Heart right ventricle (tissue), 16 donors: ENCODE measurements at regions of chr13 and their contacts with region 1.

Region 1: GRCh38 chr13:36261976-36262375 is 35.6 kb downstream of the CCDC169 start:
- DNase-seq: no peak
- ATAC-seq: peak in 1 of 8 donors; percentile 68
- H3K4me3 ChIP-seq: no peak overlapping the region
- H3K27ac ChIP-seq: no peak overlapping the region
- H3K4me1 ChIP-seq: no peaks in the 10 kb centered on the region
- H3K27me3 ChIP-seq: no peaks in the 10 kb centered on the region
- CTCF ChIP-seq: no peak

Region 2: GRCh38 chr13:35818633-35819067 is 443.3 kb before region 1 on chr13:
- intact Hi-C with region 1: no loop called
- DNase-seq: no peak
- ATAC-seq: peak in 6 of 8 donors; percentile 33 to 64 (median 38)
- H3K4me3 ChIP-seq: no peak overlapping the region
- H3K27ac ChIP-seq: no peak overlapping the region
- H3K4me1 ChIP-seq: peaks cover 0 to 7% (median 0%) of the 10 kb centered on the region in 9 donors
- H3K27me3 ChIP-seq: no peaks in the 10 kb centered on the region
- CTCF ChIP-seq: peak; percentile 62 to 81 (median 74)

Region 3: DNA sequence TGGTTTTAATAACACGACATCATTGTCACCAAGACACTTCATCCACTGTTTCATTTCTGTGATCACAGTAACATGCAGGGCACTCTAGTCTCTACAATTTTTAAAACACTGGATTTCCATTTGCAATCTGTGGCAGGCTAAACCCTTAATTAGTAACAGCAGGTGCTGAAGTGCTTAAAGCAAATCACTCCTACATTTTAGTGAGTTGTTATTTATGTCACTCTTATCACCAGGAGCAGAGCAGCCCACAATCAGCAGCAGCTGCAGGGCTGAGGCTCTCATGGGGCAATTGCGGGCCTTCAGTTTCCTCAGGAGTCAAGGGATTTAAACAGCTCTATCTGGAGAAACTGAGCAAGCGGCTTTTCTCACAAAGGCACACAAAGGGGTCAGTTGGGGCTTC is 49.2 kb before region 1 on chr13:
- intact Hi-C with region 1: loop called in 1 of 10 experiments (anchors 5 kb)
- DNase-seq: no peak
- ATAC-seq: no peak
- H3K4me3 ChIP-seq: no peak overlapping the region
- H3K27ac ChIP-seq: no peak overlapping the region
- H3K4me1 ChIP-seq: no peaks in the 10 kb centered on the region
- H3K27me3 ChIP-seq: no peaks in the 10 kb centered on the region
- CTCF ChIP-seq: no peak